ENCODE measurements at regions of chr2 and their contacts with region 1.

Region 1: GRCh38 chr2:189412330-189412953 is 28.8 kb upstream of the WDR75 start:
- DNase-seq: peak; percentile 70
- H3K4me3 ChIP-seq: no peak overlapping the region
- H3K27ac ChIP-seq: peak overlapping the region; percentile 71 to 84 (median 82)
- H3K4me1 ChIP-seq: peaks cover 0 to 53% (median 36%) of the 10 kb centered on the region in 4 donors
- H3K27me3 ChIP-seq: no peaks in the 10 kb centered on the region
- CTCF ChIP-seq: peak; percentile 66 to 78 (median 68)
- EP300 ChIP-seq: no peak
- POLR2A ChIP-seq: no peak

Region 2: GRCh38 chr2:188524519-188525113 is 887.8 kb before region 1 on chr2:
- intact Hi-C with region 1: loop called (anchors 2 kb)
- DNase-seq: no peak
- H3K4me3 ChIP-seq: no peak overlapping the region
- H3K27ac ChIP-seq: peak overlapping the region in 2 of 4 donors; percentile 69 to 73
- H3K4me1 ChIP-seq: peaks cover 0 to 53% (median 31%) of the 10 kb centered on the region in 4 donors
- H3K27me3 ChIP-seq: no peaks in the 10 kb centered on the region
- CTCF ChIP-seq: peak; percentile 15 to 83 (median 45)
- EP300 ChIP-seq: no peak
- POLR2A ChIP-seq: no peak

Region 3: GRCh38 chr2:188983427-188984064 is 428.9 kb before region 1 on chr2:
- intact Hi-C with region 1: loop called (anchors 2 kb)
- DNase-seq: no peak
- H3K4me3 ChIP-seq: peak overlapping the region in 1 of 4 donors; percentile 0
- H3K27ac ChIP-seq: peak overlapping the region; percentile 57 to 91 (median 76)
- H3K4me1 ChIP-seq: peaks cover 0 to 84% (median 50%) of the 10 kb centered on the region in 4 donors
- H3K27me3 ChIP-seq: no peaks in the 10 kb centered on the region
- CTCF ChIP-seq: peak in 3 of 4 experiments; percentile 20 to 49 (median 43)
- EP300 ChIP-seq: no peak
- POLR2A ChIP-seq: no peak

Region 4: DNA sequence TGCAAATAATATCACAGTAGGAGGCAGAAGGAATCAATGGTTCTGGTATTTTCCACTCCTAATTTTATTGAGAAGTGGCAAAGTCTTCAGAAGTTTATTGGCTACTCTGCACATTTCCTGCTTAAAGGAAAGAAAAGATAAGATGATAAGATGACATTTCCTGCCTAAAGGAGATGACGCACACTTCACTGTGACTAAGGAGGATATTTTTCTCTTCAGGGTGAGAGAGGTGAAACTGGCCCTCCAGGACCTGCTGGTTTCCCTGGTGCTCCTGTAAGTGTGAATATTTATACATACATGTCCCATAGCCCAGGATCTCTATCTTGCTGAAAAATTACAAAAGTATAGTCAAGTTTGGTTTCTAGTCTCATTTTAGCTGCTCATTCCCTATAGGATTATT is 410.4 kb before region 1 on chr2:
- intact Hi-C with region 1: no loop called
- DNase-seq: no peak
- H3K4me3 ChIP-seq: no peak overlapping the region
- H3K27ac ChIP-seq: peak overlapping the region in 2 of 4 donors; percentile 2 to 11
- H3K4me1 ChIP-seq: peaks cover 0 to 6% (median 0%) of the 10 kb centered on the region in 4 donors
- H3K27me3 ChIP-seq: no peaks in the 10 kb centered on the region
- CTCF ChIP-seq: no peak
- EP300 ChIP-seq: no peak
- POLR2A ChIP-seq: no peak

Region 5: DNA sequence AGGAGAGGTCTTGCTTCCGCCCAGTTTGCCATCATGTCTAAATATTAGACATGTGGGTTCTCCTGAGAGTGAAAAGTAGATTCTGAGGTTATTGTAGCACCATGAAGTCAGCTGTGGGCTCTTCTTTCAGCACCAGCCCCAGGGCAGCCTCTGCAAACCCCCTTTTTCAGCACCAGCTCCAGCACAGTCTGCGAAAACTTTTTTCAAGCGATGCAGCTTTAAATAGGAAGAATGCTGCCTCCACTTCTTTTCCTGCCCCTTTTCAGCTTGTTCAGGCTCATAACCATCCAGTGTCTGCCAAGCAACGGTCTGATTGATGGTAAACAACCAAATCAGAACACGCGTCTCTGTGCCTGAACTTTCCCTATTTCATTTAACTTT is 232.9 kb before region 1 on chr2 and contains the start of gene COL5A2:
- intact Hi-C with region 1: loop called (anchors 5 kb)
- DNase-seq: peak; percentile 79
- H3K4me3 ChIP-seq: peak within 1 kb of the TSS; percentile 58 to 69 (median 66)
- H3K27ac ChIP-seq: peak within 1 kb of the TSS; percentile 77 to 91 (median 86)
- H3K4me1 ChIP-seq: peaks cover 0 to 28% (median 14%) of the 10 kb centered on the region in 4 donors
- H3K27me3 ChIP-seq: no peaks in the 10 kb centered on the region
- CTCF ChIP-seq: no peak
- EP300 ChIP-seq: no peak
- POLR2A ChIP-seq: peak in 1 of 2 donors; percentile 42
- total RNA-seq, gene COL5A2: 60.9 to 164 (median 90.0) TPM

Region 6: DNA sequence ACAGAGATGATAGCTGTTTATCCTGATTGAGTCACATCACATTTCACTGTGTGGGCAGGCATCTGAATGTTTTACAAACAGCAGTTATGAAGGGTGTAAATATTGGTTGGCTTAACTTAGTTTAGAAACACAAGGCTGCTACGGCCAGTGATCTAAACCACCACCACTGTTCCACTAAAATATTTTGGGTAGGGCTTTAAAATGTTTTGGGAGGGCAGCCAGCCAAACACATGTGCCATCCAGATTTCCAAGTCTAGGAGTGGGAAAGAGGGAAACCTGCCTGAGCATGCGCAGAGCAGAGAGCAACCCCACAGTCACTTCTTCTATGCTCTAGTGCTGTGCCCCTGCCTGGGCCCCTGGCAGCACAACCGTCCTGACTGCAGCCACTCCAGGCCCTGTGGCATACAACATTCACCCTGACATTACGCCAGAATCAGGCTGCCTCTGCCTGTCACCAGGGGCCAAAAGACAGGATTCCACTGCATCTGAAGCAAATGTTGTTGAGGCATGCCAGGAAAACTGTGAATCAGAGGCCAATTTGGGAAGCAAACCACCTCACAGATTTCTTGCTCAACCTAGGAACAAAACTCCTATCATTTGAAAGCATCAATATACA is 158.1 kb before region 1 on chr2:
- intact Hi-C with region 1: no loop called
- DNase-seq: peak; percentile 73
- H3K4me3 ChIP-seq: no peak overlapping the region
- H3K27ac ChIP-seq: peak overlapping the region; percentile 2 to 57 (median 39)
- H3K4me1 ChIP-seq: peaks cover 0 to 26% (median 18%) of the 10 kb centered on the region in 4 donors
- H3K27me3 ChIP-seq: no peaks in the 10 kb centered on the region
- CTCF ChIP-seq: no peak
- EP300 ChIP-seq: no peak
- POLR2A ChIP-seq: no peak

Region 7: DNA sequence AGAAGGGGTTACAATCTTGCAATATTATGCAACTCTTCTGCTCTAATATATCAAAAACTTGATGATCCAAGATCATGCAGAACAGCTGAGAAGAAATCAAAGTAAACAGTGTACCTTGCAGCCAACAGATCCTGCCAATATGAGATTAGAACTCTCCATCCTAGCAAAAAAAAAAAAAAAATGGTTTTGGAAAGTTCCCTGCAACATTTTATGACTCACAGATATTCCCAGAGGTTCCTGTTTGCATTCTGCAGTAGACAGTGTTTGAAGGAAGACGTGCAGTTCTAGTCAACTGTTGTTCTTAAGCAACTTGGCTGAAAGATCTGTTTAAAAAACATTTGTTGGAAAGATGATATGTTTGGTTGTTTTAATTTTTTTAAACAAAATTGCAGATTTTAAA is 74.8 kb before region 1 on chr2:
- intact Hi-C with region 1: loop called (anchors 5 kb)
- DNase-seq: no peak
- H3K4me3 ChIP-seq: no peak overlapping the region
- H3K27ac ChIP-seq: peak overlapping the region; percentile 64 to 83 (median 78)
- H3K4me1 ChIP-seq: peaks cover 0 to 25% (median 8%) of the 10 kb centered on the region in 4 donors
- H3K27me3 ChIP-seq: no peaks in the 10 kb centered on the region
- CTCF ChIP-seq: no peak
- EP300 ChIP-seq: peak in 3 of 4 donors; percentile 19 to 78 (median 52)
- POLR2A ChIP-seq: no peak

Region 8: DNA sequence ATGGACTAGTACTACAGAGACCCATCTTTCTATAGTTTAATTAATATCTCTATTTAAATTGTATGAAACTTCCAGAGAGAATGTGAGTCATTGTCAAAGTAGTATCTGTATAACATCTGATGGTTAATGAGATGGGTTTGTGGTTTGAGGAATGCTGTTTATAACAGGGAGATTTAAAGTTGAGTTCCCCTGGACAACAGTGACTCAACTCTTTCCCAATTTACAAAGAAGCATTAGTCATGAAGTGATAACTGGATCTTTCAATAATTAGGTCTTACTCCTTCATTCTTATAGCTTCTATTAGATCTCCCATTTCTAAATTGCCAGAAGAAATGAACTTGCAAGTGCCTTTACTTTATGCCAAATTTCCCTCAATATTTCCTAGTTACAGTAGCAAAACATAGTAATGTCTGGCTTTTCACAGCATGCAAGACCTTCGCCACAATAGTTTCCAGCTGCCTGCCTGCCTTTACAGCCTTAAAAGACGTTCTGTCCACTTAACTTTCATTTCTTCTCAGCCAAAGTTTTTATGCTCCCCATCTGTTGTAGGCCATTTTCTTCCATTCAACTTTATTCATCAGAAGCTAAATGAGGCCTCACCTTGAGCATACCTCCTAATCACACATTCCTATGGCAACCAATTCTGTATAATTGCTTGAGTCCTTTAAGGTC is 18.9 kb before region 1 on chr2:
- intact Hi-C with region 1: no loop called
- DNase-seq: no peak
- H3K4me3 ChIP-seq: no peak overlapping the region
- H3K27ac ChIP-seq: peak overlapping the region; percentile 51 to 80 (median 74)
- H3K4me1 ChIP-seq: peaks cover 0 to 34% (median 29%) of the 10 kb centered on the region in 4 donors
- H3K27me3 ChIP-seq: no peaks in the 10 kb centered on the region
- CTCF ChIP-seq: no peak
- EP300 ChIP-seq: peak in 3 of 4 donors; percentile 17 to 79 (median 63)
- POLR2A ChIP-seq: no peak

Region 9: GRCh38 chr2:189592353-189592984 is 180.0 kb after region 1 on chr2:
- intact Hi-C with region 1: no loop called
- DNase-seq: no peak
- H3K4me3 ChIP-seq: no peak overlapping the region
- H3K27ac ChIP-seq: no peak overlapping the region
- H3K4me1 ChIP-seq: no peaks in the 10 kb centered on the region
- H3K27me3 ChIP-seq: no peaks in the 10 kb centered on the region
- CTCF ChIP-seq: no peak
- EP300 ChIP-seq: no peak
- POLR2A ChIP-seq: no peak

Measured in sigmoid colon (tissue), 7 donors.